Activated CD4-positive, alpha-beta T cell treated with anti-CD3 and anti-CD28 coated beads for 36 hours (primary cell): ENCODE measurements at regions of chr10 and their contacts with region 1.

Region 1: GRCh38 chr10:22420787-22421517 is 75.7 kb downstream of the SPAG6 start:
- DNase-seq: no peak
- ATAC-seq: peak; percentile 60
- H3K4me3 Mint-ChIP-seq: no peak overlapping the region
- H3K27ac Mint-ChIP-seq: no peak overlapping the region
- H3K4me1 Mint-ChIP-seq: no peaks in the 10 kb centered on the region
- H3K27me3 Mint-ChIP-seq: no peaks in the 10 kb centered on the region

Region 2: GRCh38 chr10:21649454-21649872 is 771.5 kb before region 1 on chr10:
- CTCF ChIA-PET with region 1: no interaction called
- POLR2A ChIA-PET with region 1: no interaction called
- intact Hi-C with region 1: no loop called
- DNase-seq: peak; percentile 31
- ATAC-seq: peak; percentile 97
- H3K4me3 Mint-ChIP-seq: no peak overlapping the region
- H3K27ac Mint-ChIP-seq: peak overlapping the region; percentile 61
- H3K4me1 Mint-ChIP-seq: peaks cover 21% of the 10 kb centered on the region
- H3K27me3 Mint-ChIP-seq: no peaks in the 10 kb centered on the region

Region 3: GRCh38 chr10:22259280-22259679 is 161.7 kb before region 1 on chr10:
- CTCF ChIA-PET with region 1: no interaction called
- POLR2A ChIA-PET with region 1: no interaction called
- intact Hi-C with region 1: loop called in 1 of 2 experiments (anchors 5 kb)
- DNase-seq: peak; percentile 33
- ATAC-seq: peak; percentile 68
- H3K4me3 Mint-ChIP-seq: no peak overlapping the region
- H3K27ac Mint-ChIP-seq: no peak overlapping the region
- H3K4me1 Mint-ChIP-seq: peaks cover 24% of the 10 kb centered on the region
- H3K27me3 Mint-ChIP-seq: peaks cover 17% of the 10 kb centered on the region